Naive thymus-derived CD4-positive, alpha-beta T cell (primary cell): ENCODE measurements at regions of chr4 and their contacts with region 1.

Region 1: GRCh38 chr4:105146276-105147015 is at the start of gene TET2:
- DNase-seq: peak; percentile 66 to 85 (median 78)
- ATAC-seq: peak; percentile 89
- H3K4me3 ChIP-seq: peak within 1 kb of the TSS; percentile 97
- H3K4me3 Mint-ChIP-seq: peak within 1 kb of the TSS; percentile 95 to 100 (median 100)
- H3K27ac ChIP-seq: peak within 1 kb of the TSS; percentile 80
- H3K27ac Mint-ChIP-seq: peak within 1 kb of the TSS; percentile 92 to 100 (median 98)
- H3K4me1 ChIP-seq: peaks cover 0 to 6% of the 10 kb centered on the region in 2 donors
- H3K4me1 Mint-ChIP-seq: peaks cover 31 to 41% (median 34%) of the 10 kb centered on the region in 7 donors
- H3K27me3 ChIP-seq: no peaks in the 10 kb centered on the region
- H3K27me3 Mint-ChIP-seq: peaks cover 0 to 3% (median 0%) of the 10 kb centered on the region in 5 donors
- total RNA-seq, gene TET2: 15.2 to 78.4 (median 32.2) TPM

Region 2: GRCh38 chr4:104930298-104930697 is 216.1 kb before region 1 on chr4:
- CTCF ChIA-PET with region 1: no interaction called
- POLR2A ChIA-PET with region 1: no interaction called
- intact Hi-C with region 1: loop called in 1 of 2 experiments (anchors 2 kb)
- DNase-seq: no peak
- ATAC-seq: no peak
- H3K4me3 ChIP-seq: no peak overlapping the region
- H3K4me3 Mint-ChIP-seq: peak overlapping the region in 6 of 10 donors; percentile 11 to 52 (median 22)
- H3K27ac ChIP-seq: no peak overlapping the region
- H3K27ac Mint-ChIP-seq: peak overlapping the region in 3 of 9 donors; percentile 17 to 81 (median 62)
- H3K4me1 ChIP-seq: no peaks in the 10 kb centered on the region
- H3K4me1 Mint-ChIP-seq: peaks cover 7 to 44% (median 19%) of the 10 kb centered on the region in 7 donors
- H3K27me3 ChIP-seq: no peaks in the 10 kb centered on the region
- H3K27me3 Mint-ChIP-seq: peaks cover 0 to 12% (median 0%) of the 10 kb centered on the region in 5 donors

Region 3: DNA sequence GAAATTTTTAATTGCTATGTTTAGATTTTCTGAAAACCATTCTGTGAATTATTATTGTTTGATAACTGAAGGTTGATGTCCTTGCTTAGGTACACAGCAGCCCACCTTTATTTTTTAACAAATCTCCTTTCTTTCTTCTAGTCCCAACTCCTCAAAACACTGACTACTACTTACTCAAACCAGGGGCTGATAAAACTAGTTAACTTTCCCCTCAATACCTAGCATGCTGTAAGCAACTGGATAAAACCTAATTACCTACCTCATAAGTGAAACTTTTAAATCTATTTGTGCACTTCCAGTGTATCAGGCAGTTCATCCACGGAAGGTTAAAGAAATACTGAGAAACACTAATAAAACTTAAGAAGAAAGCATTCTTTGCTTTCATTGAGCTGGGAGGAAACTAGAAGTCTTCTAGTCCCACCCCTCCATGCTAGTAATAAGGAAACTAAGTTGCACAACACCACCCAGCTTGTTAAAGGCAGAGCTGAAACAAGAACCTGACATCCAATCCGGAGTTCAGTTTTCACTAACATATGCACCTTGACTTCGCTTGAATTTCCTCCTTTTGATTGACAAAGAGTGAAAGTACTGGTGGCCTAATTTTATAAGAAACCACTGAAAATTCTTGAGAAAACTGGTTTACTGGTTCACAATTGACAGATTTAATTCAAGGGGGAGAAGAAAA is 180.0 kb before region 1 on chr4:
- CTCF ChIA-PET with region 1: no interaction called
- POLR2A ChIA-PET with region 1: no interaction called
- intact Hi-C with region 1: loop called in 1 of 2 experiments (anchors 2 kb)
- DNase-seq: peak in 5 of 9 donors; percentile 1 to 13 (median 4)
- ATAC-seq: peak; percentile 93
- H3K4me3 ChIP-seq: no peak overlapping the region
- H3K4me3 Mint-ChIP-seq: peak overlapping the region in 8 of 10 donors; percentile 46 to 83 (median 54)
- H3K27ac ChIP-seq: no peak overlapping the region
- H3K27ac Mint-ChIP-seq: peak overlapping the region in 8 of 9 donors; percentile 5 to 89 (median 66)
- H3K4me1 ChIP-seq: peaks cover 0 to 7% of the 10 kb centered on the region in 2 donors
- H3K4me1 Mint-ChIP-seq: peaks cover 4 to 11% (median 9%) of the 10 kb centered on the region in 7 donors
- H3K27me3 ChIP-seq: no peaks in the 10 kb centered on the region
- H3K27me3 Mint-ChIP-seq: peaks cover 2 to 14% (median 6%) of the 10 kb centered on the region in 5 donors

Region 4: DNA sequence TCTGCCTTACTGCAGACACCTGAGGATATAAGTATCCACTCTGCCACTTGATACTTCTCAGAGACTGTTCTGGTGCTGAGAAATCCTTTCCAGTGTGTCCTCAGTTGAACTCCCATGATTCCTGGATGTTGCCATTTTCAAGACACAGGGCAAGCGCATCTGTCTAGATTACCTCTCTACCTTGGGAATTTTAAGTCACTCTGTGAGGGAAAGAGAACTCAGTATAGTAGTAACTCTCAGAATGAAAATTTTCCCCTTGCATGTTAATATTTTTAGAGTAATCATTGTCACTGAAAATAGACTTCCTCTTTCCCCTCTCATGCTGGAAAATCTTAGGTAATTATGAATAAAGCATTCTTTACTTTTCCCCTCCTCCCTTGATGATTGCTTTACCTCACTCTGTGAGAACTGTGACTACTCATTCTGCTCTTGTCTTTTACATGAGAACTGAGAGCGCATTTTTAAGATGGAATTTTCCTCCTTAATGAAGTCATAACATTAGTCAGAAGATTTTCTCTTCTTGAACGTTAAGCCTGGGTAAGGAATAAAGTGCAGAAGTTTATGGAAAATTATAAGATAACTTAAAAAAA is 45.3 kb after region 1 on chr4:
- CTCF ChIA-PET with region 1: no interaction called
- POLR2A ChIA-PET with region 1: no interaction called
- intact Hi-C with region 1: loop called in 1 of 2 experiments (anchors 5 kb)
- DNase-seq: no peak
- ATAC-seq: peak; percentile 21
- H3K4me3 ChIP-seq: no peak overlapping the region
- H3K4me3 Mint-ChIP-seq: peak overlapping the region in 2 of 10 donors; percentile 14 to 31
- H3K27ac ChIP-seq: no peak overlapping the region
- H3K27ac Mint-ChIP-seq: peak overlapping the region in 1 of 9 donors; percentile 70
- H3K4me1 ChIP-seq: no peaks in the 10 kb centered on the region
- H3K4me1 Mint-ChIP-seq: peaks cover 26 to 57% (median 39%) of the 10 kb centered on the region in 7 donors
- H3K27me3 ChIP-seq: no peaks in the 10 kb centered on the region
- H3K27me3 Mint-ChIP-seq: no peaks in the 10 kb centered on the region

Region 5: DNA sequence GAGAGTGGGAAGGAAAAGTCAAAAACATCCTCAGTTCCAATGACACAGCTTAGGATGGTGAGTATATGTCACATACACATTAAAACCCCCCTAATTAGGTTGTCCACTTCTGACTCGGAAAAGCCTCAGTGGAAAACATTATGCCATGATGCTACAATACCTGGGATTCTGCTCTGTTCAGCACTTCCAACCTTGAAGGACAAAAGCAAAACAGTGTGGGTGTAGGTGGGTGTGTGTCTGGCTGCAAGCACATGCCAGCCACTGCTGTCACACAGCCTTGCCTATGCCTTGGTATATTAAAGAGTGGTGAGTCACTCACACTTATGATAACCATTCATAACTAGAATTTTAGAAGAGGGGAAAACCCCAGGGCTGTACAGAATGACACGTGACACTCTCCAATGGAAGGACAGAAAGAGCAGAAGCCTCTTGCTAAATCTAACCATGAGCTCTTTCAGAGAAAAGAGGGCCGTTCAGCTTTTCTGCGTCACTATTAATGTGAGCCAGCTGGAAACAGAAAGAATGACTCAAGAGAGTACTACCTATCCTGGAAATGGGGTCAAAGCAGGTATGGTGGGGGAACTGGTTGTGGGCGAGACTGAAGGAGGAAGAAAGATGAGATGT is 159.8 kb after region 1 on chr4:
- CTCF ChIA-PET with region 1: no interaction called
- POLR2A ChIA-PET with region 1: no interaction called
- intact Hi-C with region 1: loop called in 1 of 2 experiments (anchors 1 kb)
- DNase-seq: peak in 1 of 9 donors; percentile 63
- ATAC-seq: peak; percentile 88
- H3K4me3 ChIP-seq: no peak overlapping the region
- H3K4me3 Mint-ChIP-seq: peak overlapping the region in 1 of 10 donors; percentile 47
- H3K27ac ChIP-seq: no peak overlapping the region
- H3K27ac Mint-ChIP-seq: peak overlapping the region in 1 of 9 donors; percentile 68
- H3K4me1 ChIP-seq: no peaks in the 10 kb centered on the region
- H3K4me1 Mint-ChIP-seq: peaks cover 0 to 22% (median 0%) of the 10 kb centered on the region in 7 donors
- H3K27me3 ChIP-seq: no peaks in the 10 kb centered on the region
- H3K27me3 Mint-ChIP-seq: no peaks in the 10 kb centered on the region

Region 6: DNA sequence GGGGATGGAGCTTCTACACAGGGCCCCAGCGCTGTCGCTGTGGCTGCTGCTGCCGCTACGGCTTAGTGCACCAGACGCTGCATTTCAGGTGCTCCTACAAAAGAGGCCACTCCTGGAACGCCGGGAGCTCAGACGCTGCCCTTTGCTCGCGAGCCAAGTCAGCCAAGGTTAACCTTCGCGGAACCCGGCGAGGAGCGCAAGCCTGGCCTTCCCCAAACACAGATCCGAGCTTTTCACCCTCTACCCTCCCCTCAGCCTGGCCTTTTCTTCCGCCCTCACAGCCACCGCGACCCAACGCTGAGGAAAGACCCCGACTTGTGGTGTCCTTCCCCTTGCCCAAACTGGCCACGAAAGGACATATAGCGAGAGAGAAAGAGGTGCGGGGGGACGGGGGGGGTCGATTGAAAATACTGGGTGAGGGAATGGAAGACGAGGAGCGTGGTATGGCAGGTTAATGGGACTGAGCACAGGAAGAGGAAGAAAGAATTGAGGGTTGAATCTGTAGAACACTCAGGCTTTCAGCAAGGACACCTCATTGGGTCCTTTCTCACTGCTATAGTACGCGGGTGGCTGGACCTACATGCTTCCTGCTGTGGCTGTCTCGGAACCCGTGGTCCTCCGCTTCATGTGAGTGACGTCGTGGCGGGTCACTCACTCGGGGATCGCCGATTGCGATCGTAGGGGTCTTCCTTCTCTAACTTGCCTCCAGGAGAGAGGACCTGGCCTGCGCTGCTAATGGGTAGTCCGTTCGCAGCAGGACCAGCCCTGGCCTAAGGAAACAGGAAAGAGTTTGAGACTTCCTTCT is 1169.7 kb after region 1 on chr4 and contains the starts of genes AIMP1 and TBCK:
- CTCF ChIA-PET with region 1: no interaction called
- POLR2A ChIA-PET with region 1: no interaction called
- intact Hi-C with region 1: loop called in 1 of 2 experiments (anchors 1 kb)
- DNase-seq: peak; percentile 74 to 92 (median 88)
- ATAC-seq: peak; percentile 93
- H3K4me3 ChIP-seq: peak within 1 kb of the TSS; percentile 95
- H3K4me3 Mint-ChIP-seq: no peak within 1 kb of the TSS
- H3K27ac ChIP-seq: peak within 1 kb of the TSS; percentile 90
- H3K27ac Mint-ChIP-seq: no peak within 1 kb of the TSS
- H3K4me1 ChIP-seq: peaks cover 22 to 24% of the 10 kb centered on the region in 2 donors
- H3K4me1 Mint-ChIP-seq: peaks cover 23 to 50% (median 43%) of the 10 kb centered on the region in 7 donors
- H3K27me3 ChIP-seq: no peaks in the 10 kb centered on the region
- H3K27me3 Mint-ChIP-seq: no peaks in the 10 kb centered on the region
- total RNA-seq, gene AIMP1: 44.2 to 59.2 (median 56.8) TPM
- total RNA-seq, gene TBCK: 41.3 to 70.7 (median 60.7) TPM